HepG2 (cell line): ENCODE measurements at regions of chr6 and their contacts with region 1.

Region 1: GRCh38 chr6:47126647-47127391 is 84.7 kb upstream of the ADGRF1 start:
- DNase-seq: peak; percentile 91
- ATAC-seq: peak; percentile 89
- H3K4me3 ChIP-seq: peak overlapping the region; percentile 27 to 47 (median 43); a peak in 5 of 6 replicates
- H3K27ac ChIP-seq: peak overlapping the region; percentile 70
- H3K4me1 ChIP-seq: peaks cover 59% of the 10 kb centered on the region
- H3K27me3 ChIP-seq: no peaks in the 10 kb centered on the region
- CTCF ChIP-seq: no peak
- EP300 ChIP-seq: peak in 1 of 2 experiments; percentile 58; a peak in 2 of 4 replicates
- POLR2A ChIP-seq: 0 out of 4 replicates have a peak, but pooled peaks of 1 of the 2 experiments have one; percentile 32
- RAD21 ChIP-seq: 0 out of 2 replicates have a peak, but pooled peaks have one; percentile 10

Region 2: DNA sequence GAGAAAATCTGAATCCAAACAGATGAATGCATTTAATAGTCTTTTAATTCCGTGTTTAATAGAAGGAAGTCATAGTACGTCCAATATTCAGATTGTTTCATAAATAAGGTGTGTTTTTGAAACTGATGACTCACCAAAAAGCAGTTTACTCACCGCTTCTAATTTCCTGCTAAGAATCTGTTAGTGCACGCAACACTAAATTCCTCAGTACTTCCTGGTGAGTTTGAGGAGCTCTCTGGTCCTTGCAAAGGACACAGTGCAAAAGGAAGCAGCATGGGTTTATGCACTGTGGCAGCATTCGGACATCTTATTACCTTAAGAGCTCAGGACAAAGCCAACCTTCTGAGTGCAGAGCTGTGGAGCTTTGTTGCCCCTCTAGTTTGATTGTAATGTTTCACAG is 82.4 kb before region 1 on chr6:
- CTCF ChIA-PET with region 1: no interaction called
- POLR2A ChIA-PET with region 1: no interaction called
- in situ Hi-C with region 1: no loop called
- intact Hi-C with region 1: no loop called
- DNase-seq: no peak
- ATAC-seq: no peak
- H3K4me3 ChIP-seq: no peak overlapping the region
- H3K27ac ChIP-seq: no peak overlapping the region
- H3K4me1 ChIP-seq: peaks cover 28% of the 10 kb centered on the region
- H3K27me3 ChIP-seq: peaks cover 2 to 9% of the 10 kb centered on the region in 2 experiments; a peak in 3 of 5 replicates
- CTCF ChIP-seq: no peak
- EP300 ChIP-seq: no peak
- POLR2A ChIP-seq: no peak
- RAD21 ChIP-seq: no peak

Region 3: DNA sequence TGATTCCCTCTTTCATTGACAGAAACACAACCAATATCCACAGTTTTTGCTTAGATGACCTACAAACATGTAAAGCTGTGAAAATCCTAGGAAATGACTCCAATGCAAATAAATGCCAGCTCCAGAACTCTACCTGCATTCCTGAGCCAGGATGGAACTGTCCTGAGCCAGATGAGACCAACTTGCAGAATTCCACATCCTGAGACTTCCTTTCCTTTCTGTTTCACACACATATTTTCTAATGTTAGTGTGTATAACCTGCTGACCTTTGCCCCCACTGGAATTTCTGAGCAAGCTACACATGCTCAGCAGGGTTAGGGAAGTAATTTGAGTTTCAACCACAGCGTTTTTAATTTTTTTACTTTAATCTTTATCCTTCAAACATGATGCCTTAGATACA is 15.1 kb before region 1 on chr6:
- CTCF ChIA-PET with region 1: no interaction called
- POLR2A ChIA-PET with region 1: interaction called, 5 read pairs
- in situ Hi-C with region 1: no loop called
- intact Hi-C with region 1: loop called (anchors 2 kb)
- DNase-seq: peak; percentile 93
- ATAC-seq: peak; percentile 79
- H3K4me3 ChIP-seq: peak overlapping the region in 1 of 3 experiments; percentile 15; a peak in 1 of 6 replicates
- H3K27ac ChIP-seq: peak overlapping the region; percentile 4
- H3K4me1 ChIP-seq: peaks cover 44% of the 10 kb centered on the region
- H3K27me3 ChIP-seq: no peaks in the 10 kb centered on the region
- CTCF ChIP-seq: no peak
- EP300 ChIP-seq: peak in 1 of 2 experiments; percentile 54; a peak in 1 of 4 replicates
- POLR2A ChIP-seq: no peak
- RAD21 ChIP-seq: no peak

Region 4: DNA sequence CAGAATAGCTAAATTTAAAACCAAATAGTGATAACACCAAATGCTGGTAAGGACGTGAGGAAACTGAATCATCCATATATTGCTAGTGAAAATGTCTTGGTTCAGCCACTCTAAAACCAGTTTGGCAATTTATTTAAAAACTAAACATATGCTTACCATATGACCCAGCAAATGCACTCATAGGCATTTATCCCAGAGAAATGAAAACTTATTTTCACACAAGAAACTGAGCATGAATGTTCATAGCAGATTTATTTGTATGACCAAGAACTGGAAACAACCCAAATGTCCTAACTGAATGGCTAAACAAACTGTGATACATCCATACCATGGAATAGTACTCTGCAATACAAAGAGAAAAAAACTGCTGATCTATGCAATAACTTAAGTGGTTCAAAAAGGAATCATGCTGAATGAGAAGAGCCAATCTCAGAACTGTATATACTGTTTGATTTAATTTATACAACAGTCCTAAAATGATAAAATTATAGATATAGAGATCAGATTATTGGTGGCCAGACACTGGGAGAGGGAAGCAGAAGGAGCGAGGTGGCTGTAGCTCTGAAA is 30.9 kb after region 1 on chr6:
- CTCF ChIA-PET with region 1: no interaction called
- POLR2A ChIA-PET with region 1: no interaction called
- in situ Hi-C with region 1: no loop called
- intact Hi-C with region 1: loop called (anchors 1 kb)
- DNase-seq: no peak
- ATAC-seq: no peak
- H3K4me3 ChIP-seq: no peak overlapping the region
- H3K27ac ChIP-seq: no peak overlapping the region
- H3K4me1 ChIP-seq: peaks cover 37% of the 10 kb centered on the region
- H3K27me3 ChIP-seq: no peaks in the 10 kb centered on the region
- CTCF ChIP-seq: no peak
- EP300 ChIP-seq: no peak
- POLR2A ChIP-seq: no peak
- RAD21 ChIP-seq: no peak